Esophagus squamous epithelium (tissue), 5 donors: ENCODE measurements at regions of chr2 and their contacts with region 1.

Region 1: GRCh38 chr2:178414266-178415247 is 36.4 kb downstream of the PRKRA start:
- DNase-seq: peak; percentile 36
- H3K4me3 ChIP-seq: peak overlapping the region; percentile 50 to 80 (median 68)
- H3K27ac ChIP-seq: peak overlapping the region; percentile 89 to 95 (median 91)
- H3K4me1 ChIP-seq: peaks cover 4 to 51% (median 10%) of the 10 kb centered on the region in 3 donors
- H3K27me3 ChIP-seq: no peaks in the 10 kb centered on the region
- CTCF ChIP-seq: peak; percentile 60 to 88 (median 84)
- POLR2A ChIP-seq: peak in 1 of 4 donors; percentile 44

Region 2: DNA sequence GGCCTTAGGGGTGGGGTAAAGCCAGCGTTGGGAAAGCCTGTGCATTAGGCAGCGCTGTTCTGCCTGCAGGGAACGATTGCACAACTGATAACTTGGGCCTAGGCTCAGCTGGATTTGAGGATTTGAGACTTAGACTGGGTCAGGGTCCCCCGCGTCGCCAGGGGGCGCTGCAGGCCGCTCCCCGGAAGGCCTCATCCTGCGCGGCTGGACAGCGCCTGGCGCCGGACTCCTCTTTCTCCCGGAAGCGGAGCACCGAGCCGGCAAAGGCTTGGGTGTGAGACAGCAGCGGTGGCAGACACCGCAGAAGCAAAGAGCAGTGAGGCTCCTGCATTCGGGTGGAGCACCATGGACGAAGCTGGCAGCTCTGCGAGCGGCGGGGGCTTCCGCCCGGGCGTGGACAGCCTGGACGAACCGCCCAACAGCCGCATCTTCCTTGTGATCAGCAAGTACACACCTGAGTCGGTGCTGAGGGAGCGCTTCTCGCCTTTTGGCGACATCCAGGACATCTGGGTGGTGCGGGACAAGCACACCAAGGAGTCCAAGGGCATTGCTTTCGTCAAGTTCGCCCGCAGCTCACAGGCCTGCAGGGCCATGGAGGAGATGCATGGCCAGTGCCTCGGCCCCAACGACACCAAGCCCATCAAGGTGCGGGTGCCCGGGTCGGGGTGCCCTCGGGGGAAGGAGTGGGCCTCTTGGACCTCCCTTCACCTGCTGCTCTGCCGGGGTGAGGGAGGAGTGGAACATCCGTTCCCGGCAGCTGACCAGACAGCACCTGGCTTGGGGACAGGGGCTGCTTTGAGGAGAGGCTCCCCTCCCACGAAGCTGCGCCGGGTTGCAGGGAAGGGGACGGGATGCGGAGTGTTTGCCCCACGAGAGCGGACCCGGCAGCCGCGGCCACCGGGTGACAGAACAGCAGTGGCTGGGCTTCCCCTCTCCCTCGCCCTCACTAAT is 302.1 kb before region 1 on chr2 and contains the start of gene RBM45:
- intact Hi-C with region 1: loop called (anchors 10 kb)
- DNase-seq: peak; percentile 32
- H3K4me3 ChIP-seq: peak within 1 kb of the TSS; percentile 67 to 85 (median 77)
- H3K27ac ChIP-seq: peak within 1 kb of the TSS; percentile 64 to 81 (median 80)
- H3K4me1 ChIP-seq: peaks cover 0 to 25% (median 13%) of the 10 kb centered on the region in 3 donors
- H3K27me3 ChIP-seq: peaks cover 0 to 8% (median 0%) of the 10 kb centered on the region in 4 donors
- CTCF ChIP-seq: peak; percentile 92 to 98 (median 96)
- POLR2A ChIP-seq: peak in 2 of 4 donors; percentile 40 to 58
- total RNA-seq, gene RBM45: 1.6 to 13.2 (median 8.4) TPM